AG04449 (cell line): ENCODE measurements at regions of chr1 and their contacts with region 1.

Region 1: GRCh38 chr1:29033829-29034466 is 89.8 kb downstream of the TMEM200B start:
- DNase-seq: no peak
- H3K4me3 ChIP-seq: no peak overlapping the region
- CTCF ChIP-seq: peak; percentile 25

Region 2: DNA sequence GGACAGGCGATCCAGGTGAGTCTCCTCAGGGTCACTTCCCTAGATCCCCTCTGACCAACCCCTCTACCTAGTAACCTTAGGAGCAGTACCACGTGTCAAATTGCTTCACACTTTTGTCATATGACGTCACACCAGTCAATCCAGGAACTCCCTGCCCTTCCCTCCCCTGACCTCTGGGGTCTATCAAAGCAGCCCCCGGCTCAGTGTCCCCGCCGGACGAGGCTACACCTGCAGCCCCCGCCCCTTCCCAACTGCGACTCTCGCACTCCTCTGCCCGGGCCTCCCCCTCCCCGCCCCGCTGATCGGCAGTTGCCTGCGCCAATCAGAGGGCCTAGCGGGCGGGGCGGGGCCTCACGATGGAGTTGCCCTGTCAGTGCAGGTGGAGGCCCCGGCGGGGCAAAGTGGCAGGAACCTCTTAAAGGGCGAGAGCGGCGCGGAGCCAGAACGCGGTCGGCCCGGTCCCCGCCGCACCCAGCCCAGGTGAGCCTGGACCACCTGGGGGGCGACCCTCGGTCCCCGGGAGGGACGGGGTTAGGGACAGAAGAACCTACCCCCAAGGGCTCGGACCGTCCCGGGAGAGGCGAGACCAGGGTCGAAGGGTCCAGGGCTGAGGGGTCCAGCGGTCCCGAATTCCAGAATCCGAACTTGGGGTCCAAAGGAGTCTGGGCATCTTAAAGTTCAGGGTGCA is 147.1 kb before region 1 on chr1:
- CTCF ChIA-PET with region 1: interaction called, 1,100 read pairs
- POLR2A ChIA-PET with region 1: interaction called, 5 read pairs
- DNase-seq: no peak
- H3K4me3 ChIP-seq: peak overlapping the region; percentile 87
- CTCF ChIP-seq: no peak

Region 3: GRCh38 chr1:28902738-28903137 is 131.2 kb before region 1 on chr1:
- CTCF ChIA-PET with region 1: interaction called, 182 read pairs
- POLR2A ChIA-PET with region 1: no interaction called
- DNase-seq: no peak
- H3K4me3 ChIP-seq: no peak overlapping the region
- CTCF ChIP-seq: no peak

Region 4: GRCh38 chr1:28971980-28972771 is 61.8 kb before region 1 on chr1:
- CTCF ChIA-PET with region 1: interaction called, 15 read pairs
- POLR2A ChIA-PET with region 1: interaction called, 3 read pairs
- DNase-seq: peak; percentile 90
- H3K4me3 ChIP-seq: no peak overlapping the region
- CTCF ChIP-seq: no peak

Region 5: GRCh38 chr1:29011775-29012174 is 22.2 kb before region 1 on chr1:
- CTCF ChIA-PET with region 1: interaction called, 15 read pairs
- POLR2A ChIA-PET with region 1: no interaction called
- DNase-seq: no peak
- H3K4me3 ChIP-seq: no peak overlapping the region
- CTCF ChIP-seq: no peak

Region 6: DNA sequence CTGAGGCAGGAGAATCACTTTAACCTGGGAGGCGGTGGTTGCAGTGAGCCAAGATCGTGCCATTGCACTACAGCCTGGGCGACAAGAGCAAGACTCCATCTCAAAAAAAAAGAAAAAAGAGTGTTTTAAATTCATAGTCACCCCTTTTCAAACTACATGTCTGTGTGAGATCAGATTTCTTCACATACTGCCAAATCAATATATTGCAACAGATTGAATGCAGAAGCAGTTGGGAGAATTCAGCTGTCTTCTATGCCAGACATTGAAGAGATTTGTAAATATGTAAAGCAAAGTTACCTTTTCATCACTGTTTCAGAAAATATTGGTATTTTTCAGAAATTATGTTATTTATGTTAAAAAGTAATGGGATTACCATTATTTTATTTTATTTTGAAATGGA is 11.3 kb before region 1 on chr1:
- CTCF ChIA-PET with region 1: interaction called, 53 read pairs
- POLR2A ChIA-PET with region 1: no interaction called
- DNase-seq: no peak
- H3K4me3 ChIP-seq: no peak overlapping the region
- CTCF ChIP-seq: no peak

Region 7: GRCh38 chr1:29081201-29081600 is 47.3 kb after region 1 on chr1:
- CTCF ChIA-PET with region 1: no interaction called
- POLR2A ChIA-PET with region 1: no interaction called
- DNase-seq: no peak
- H3K4me3 ChIP-seq: no peak overlapping the region
- CTCF ChIP-seq: no peak

Region 8: GRCh38 chr1:29094433-29094832 is 60.5 kb after region 1 on chr1:
- CTCF ChIA-PET with region 1: no interaction called
- POLR2A ChIA-PET with region 1: no interaction called
- DNase-seq: no peak
- H3K4me3 ChIP-seq: no peak overlapping the region
- CTCF ChIP-seq: no peak

Region 9: DNA sequence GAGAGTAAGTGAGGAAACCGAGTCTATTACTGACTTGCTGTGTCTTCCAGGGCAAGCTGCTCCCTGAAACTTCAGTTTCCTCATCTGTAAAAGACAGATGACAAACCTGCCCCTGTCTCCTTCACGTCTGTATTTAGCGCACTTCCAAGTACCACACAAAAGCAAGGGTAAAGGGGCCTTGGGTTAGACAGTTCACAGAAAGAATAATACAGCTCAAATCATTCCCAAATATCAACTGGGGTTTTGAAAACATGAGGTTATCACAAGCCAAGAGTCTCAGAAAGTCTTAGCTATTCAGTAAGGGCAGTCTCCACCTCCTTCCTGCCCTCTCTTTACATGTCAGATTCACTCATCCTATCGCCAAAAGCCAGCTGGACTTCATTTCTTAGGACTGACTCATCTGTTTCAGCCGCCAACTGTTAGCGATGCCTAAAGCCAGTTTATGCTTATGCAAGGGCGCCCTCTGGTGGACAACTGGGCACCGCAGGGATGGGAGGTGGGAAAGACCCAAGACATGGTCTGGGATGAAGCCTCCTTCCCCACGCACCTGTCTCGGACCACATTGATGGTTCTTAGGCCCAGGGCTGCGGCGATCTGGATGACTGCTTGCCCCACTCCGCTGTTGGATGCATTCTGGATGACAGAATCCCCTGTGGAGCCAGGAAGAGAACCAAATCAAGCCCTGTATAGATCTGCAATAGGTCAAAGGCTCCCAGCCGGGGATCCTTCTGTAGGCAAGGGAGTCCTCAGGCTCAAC is 168.8 kb after region 1 on chr1:
- CTCF ChIA-PET with region 1: interaction called, 95 read pairs
- POLR2A ChIA-PET with region 1: no interaction called
- DNase-seq: peak; percentile 91
- H3K4me3 ChIP-seq: no peak overlapping the region
- CTCF ChIP-seq: peak; percentile 93